ENCODE measurements at regions of chr12 and their contacts with region 1.

Region 1: DNA sequence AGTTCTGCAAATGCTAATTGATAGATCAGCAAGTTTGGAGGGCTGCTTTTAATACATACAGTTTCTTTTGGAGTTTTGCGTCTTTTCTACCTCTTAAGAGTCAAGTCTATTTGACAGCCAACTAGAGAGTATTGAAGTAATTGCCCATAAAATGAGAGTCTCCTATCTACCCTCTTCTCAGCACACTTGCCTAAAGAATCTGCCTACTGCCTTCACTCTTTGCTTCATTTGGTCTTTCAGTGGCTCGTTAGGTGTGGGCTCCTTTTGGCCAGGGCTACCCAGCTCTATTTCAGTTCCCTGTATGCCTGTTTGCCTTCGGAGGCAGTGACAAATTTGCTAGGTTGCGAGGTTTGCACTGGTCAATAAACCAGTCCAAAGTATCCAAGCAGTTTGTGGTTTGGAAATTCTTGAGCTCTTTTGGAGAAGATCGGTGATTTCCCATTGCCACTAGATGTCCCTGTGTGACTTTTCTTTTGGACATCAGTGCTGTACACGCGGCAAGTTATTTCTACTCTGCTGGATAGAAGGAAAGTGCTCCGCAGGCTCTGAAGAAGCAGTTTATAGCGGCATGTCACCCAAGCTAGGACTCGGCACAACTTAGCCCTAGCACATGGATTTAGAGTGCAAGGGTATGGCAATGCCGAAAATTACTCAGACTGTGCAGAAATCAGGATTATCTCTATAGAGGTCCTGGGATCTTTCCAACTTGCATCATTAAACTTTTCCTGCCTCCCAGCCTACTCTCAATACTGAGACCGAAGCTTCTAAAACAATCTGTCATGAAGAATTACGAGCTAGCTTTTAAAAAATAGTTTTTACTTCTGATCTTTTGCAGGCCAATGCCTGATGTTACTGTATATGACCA is 38.6 kb downstream of the MGST1 start:
- DNase-seq: peak; percentile 51
- H3K4me3 ChIP-seq: peak overlapping the region in 1 of 2 experiments; percentile 29; a peak in 1 of 4 replicates
- H3K27ac ChIP-seq: no peak overlapping the region
- H3K4me1 ChIP-seq: no peaks in the 10 kb centered on the region; a peak in 2 of 4 replicates
- H3K27me3 ChIP-seq: no peaks in the 10 kb centered on the region
- CTCF ChIP-seq: no peak; the same call in 1 of the 2 replicates
- EP300 ChIP-seq: no peak
- RAD21 ChIP-seq: peak; percentile 79

Region 2: DNA sequence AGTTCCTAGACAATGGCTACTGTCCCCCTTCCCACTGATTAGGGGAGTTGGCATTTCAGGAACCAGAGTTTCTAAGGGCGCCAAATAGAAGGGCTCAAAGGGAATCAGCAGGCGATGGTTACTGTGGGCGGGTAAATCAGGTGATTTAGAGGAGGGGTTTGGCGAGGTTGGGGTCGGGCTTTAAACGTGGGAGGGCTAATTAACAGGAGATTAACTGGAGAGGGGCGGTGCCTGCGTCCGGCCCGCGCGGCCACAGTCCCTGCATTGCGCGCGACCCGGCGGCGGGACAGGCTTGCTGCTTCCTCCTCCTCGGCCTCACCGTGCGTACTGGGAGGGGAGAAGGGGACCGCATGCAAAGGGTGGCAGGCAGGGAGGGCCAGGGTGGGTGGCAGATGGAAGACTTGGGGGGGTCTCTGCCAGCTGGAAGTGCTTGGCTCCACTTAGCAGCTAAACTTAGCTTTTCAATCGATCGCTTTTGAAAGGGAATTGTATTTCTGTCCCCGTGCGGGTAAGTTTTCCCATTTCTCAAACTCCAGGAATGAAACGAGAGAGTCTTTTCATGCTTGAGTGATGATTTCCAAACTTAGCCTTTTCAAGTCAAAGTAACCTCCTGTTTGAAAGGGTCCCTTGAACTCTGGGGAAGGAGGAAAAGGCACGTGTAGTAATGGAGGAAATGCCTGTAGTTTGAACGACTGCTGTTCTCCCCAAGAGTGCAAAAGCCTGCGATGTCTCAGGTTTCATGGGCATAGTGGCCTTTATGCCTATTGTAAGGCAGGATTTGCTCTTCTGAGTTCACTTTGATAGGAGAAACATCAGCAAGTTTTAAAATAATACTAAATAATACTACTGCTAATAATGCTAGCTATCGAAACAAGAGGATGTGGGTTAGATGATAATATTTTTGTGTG is 38.4 kb before region 1 on chr12 and contains the start of gene MGST1:
- CTCF ChIA-PET with region 1: no interaction called
- POLR2A ChIA-PET with region 1: no interaction called
- DNase-seq: peak; percentile 8
- H3K4me3 ChIP-seq: peak within 1 kb of the TSS; percentile 35 to 55; a peak in 2 of 4 replicates
- H3K27ac ChIP-seq: peak within 1 kb of the TSS in 1 of 2 experiments; percentile 34; a peak in 1 of 4 replicates
- H3K4me1 ChIP-seq: no peaks in the 10 kb centered on the region
- H3K27me3 ChIP-seq: no peaks in the 10 kb centered on the region
- CTCF ChIP-seq: no peak
- EP300 ChIP-seq: no peak
- RAD21 ChIP-seq: no peak
- polyA plus RNA-seq, gene MGST1: 4.8 and 7.1 TPM in 2 replicates

Region 3: DNA sequence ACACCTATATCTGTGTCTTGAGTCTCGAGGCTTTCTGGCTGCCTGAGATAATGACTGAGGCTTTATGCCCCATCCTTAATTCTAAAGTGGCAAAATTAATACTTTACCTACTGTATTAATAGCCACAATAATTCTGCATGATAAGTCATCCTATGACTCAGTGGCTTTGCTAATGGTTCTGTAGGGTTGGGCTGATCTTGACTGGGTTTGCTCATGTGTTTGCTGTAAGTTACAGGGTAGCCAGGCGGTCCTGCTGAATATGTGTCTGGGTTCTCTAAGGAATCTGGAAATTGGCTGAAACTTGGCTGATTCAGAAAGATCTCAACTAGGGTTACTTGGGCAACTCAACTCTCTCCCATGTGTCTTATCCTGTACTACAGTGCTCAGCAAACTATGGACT is 16.9 kb before region 1 on chr12:
- CTCF ChIA-PET with region 1: interaction called, 10 read pairs
- POLR2A ChIA-PET with region 1: no interaction called
- DNase-seq: no peak
- H3K4me3 ChIP-seq: no peak overlapping the region
- H3K27ac ChIP-seq: no peak overlapping the region
- H3K4me1 ChIP-seq: no peaks in the 10 kb centered on the region
- H3K27me3 ChIP-seq: no peaks in the 10 kb centered on the region
- CTCF ChIP-seq: no peak
- EP300 ChIP-seq: no peak
- RAD21 ChIP-seq: no peak

Region 4: DNA sequence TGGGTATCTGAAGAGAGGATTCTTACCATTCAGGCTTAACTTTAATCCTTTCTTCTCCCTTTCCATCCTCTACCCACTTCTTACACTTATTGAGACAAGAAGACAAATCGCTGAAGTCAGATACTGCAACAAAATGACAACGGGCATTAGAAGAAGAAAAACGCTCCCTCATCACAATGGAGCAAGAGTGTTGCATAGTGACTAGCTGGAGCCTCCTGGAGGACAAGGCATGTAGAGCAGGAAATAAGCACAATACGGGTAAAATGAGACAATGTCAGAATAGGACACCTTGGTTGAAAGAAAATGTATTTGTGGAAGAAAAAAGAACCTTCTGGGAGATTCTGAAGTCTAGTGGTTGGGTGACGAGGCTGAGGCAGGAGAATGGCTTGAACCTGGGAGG is 1203.0 kb after region 1 on chr12:
- CTCF ChIA-PET with region 1: interaction called, 18 read pairs
- POLR2A ChIA-PET with region 1: no interaction called
- DNase-seq: peak; percentile 13
- H3K4me3 ChIP-seq: no peak overlapping the region
- H3K27ac ChIP-seq: no peak overlapping the region
- H3K4me1 ChIP-seq: no peaks in the 10 kb centered on the region; a peak in 1 of 4 replicates
- H3K27me3 ChIP-seq: no peaks in the 10 kb centered on the region
- CTCF ChIP-seq: peak; percentile 47
- EP300 ChIP-seq: no peak
- RAD21 ChIP-seq: peak; percentile 68

Region 5: GRCh38 chr12:17642340-17642650 is 1256.3 kb after region 1 on chr12:
- CTCF ChIA-PET with region 1: interaction called, 41 read pairs
- POLR2A ChIA-PET with region 1: no interaction called
- DNase-seq: no peak
- H3K4me3 ChIP-seq: peak overlapping the region in 1 of 2 experiments; percentile 63; a peak in 1 of 4 replicates
- H3K27ac ChIP-seq: no peak overlapping the region
- H3K4me1 ChIP-seq: no peaks in the 10 kb centered on the region
- H3K27me3 ChIP-seq: no peaks in the 10 kb centered on the region
- CTCF ChIP-seq: no peak; the same call in 1 of the 2 replicates
- EP300 ChIP-seq: no peak
- RAD21 ChIP-seq: no peak

Measured in SK-N-SH (cell line).